Activated CD8-positive, alpha-beta T cell treated with anti-CD3 and anti-CD28 coated beads, Interleukin-2, amount 10 ng/mL, durations not matched to agents 7 days and 5 days (primary cell): ENCODE measurements at regions of chr12 and their contacts with region 1.

Region 1: DNA sequence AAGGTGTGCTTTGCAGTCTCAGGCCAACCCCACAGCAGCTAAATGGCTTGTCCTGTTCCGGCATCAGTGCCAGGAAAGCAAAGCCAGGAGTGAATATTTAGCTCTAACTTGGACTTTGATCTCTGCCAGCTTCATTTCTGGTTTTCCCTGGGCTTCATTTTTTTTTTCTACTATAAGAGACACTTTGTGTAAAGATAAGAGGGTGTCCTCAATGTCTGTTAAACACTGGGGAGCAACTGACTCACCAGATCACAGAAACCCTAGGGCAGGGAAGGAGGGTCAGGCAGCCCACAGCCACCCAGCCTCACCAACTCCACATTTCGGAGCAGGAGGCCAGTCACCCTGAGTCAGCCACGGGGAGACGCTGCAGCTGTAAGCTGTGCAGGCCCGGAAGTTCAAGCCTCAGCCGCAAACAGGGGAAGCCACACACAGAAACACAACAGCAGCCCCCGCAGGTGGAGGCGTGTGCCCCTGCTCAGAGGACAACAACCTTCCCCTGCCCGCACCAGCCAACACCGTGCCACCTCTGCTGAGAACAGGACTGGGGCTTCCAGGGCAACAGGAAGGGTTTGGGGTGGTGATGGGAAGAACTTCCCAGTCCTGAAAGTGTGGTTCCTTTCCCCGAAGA is 6.3 kb downstream of the TNFRSF1A start:
- DNase-seq: peak; percentile 93
- ATAC-seq: peak; percentile 67
- H3K4me3 Mint-ChIP-seq: no peak overlapping the region
- H3K27ac Mint-ChIP-seq: no peak overlapping the region
- H3K4me1 Mint-ChIP-seq: peaks cover 9% of the 10 kb centered on the region
- H3K27me3 Mint-ChIP-seq: no peaks in the 10 kb centered on the region

Region 2: DNA sequence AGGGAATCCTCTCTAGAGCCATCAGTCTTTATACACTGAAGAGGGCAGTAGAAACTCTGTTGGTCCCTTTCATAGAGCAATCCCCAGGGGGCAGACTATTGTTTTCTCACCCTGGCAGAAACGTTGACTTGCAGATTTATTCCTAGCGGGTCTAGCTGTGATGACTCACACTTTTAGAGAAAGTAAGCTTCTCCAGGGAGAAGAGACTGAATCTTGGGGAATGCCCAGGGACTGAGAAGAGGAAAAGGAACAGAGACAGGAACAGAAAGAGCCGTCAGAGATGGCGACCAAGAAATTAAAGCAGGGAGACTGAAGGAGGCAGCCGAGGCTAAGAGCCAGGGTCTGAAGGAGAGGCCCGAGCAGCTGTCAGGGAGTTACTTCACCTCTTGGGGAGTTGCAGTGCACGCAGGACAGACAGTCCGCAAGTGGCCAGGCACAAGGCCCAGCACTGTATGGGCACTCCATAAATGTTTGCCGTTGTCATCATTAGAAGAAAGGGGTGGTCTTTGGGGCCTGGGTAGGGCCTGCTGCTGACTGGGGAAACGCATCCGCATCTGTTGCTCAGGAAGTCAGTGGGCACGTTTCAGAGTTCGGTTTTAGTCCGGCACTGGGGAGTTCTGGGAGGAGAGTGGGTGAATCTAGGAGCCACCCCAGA is 12.1 kb before region 1 on chr12:
- CTCF ChIA-PET with region 1: interaction called, 45 read pairs
- POLR2A ChIA-PET with region 1: interaction called, 7 read pairs
- DNase-seq: peak; percentile 60
- ATAC-seq: peak; percentile 73
- H3K4me3 Mint-ChIP-seq: peak overlapping the region; percentile 45
- H3K27ac Mint-ChIP-seq: peak overlapping the region; percentile 87
- H3K4me1 Mint-ChIP-seq: peaks cover 62% of the 10 kb centered on the region
- H3K27me3 Mint-ChIP-seq: no peaks in the 10 kb centered on the region

Region 3: DNA sequence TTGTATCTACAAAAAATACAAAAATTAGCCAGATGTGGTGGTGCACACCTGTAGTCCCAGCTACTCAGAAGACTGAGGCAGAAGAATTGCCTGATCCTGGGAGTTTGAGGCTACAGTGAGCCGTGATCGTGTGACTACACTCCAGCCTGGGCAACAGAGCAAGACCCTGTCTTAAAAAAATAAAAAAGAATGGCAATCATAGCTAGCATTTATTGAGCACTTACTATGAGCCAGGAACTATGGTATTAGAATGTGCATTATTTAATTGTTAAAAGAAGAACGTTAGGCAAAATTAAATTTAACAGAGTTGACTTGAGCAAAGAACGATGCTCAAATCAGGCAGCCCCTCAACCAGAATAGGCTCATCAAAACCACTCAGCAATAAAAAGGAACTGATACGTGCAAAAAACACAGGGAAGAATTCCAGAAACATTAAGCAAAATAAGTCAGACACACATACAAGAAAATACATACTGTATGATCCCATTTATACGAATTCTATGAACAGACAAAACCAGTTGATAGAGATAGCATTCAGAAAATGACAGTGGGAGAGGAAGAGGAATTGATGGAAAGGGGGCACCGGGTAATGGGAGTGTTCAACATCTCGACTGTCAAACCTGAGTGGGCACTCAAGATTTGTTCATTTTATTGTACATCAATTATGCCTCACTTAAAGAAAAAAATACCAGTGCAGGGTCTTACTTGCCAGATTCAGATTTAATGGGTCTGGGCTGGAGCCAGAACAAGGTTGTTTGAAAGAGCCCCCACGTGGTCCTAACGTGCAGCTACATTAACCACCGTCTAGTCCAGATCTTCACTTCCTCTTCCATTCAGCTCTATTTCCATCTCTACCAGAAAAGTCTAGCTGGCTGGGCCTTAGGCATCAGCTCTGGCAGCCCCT is 31.8 kb after region 1 on chr12:
- CTCF ChIA-PET with region 1: interaction called, 176 read pairs
- POLR2A ChIA-PET with region 1: interaction called, 12 read pairs
- DNase-seq: peak; percentile 66
- ATAC-seq: peak; percentile 62
- H3K4me3 Mint-ChIP-seq: no peak overlapping the region
- H3K27ac Mint-ChIP-seq: peak overlapping the region; percentile 71
- H3K4me1 Mint-ChIP-seq: peaks cover 48% of the 10 kb centered on the region
- H3K27me3 Mint-ChIP-seq: no peaks in the 10 kb centered on the region

Region 4: DNA sequence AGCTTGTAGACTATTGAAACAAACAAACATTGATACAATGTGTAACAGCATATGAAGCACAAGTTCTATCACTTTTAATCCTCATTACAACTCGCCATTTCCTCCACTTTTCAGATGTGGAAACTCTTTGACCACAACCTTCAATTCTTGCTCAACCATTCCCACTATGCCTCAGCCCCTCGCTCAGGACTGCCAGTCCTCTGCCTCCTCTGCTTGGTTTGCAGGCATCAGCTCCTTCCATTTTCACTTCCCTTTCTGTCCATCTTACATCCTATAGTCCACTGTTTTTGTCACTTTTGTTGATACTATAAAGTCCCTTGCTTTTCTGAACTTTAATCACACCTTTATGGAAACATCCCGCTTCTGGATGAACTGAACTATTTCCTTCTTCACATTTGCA is 81.0 kb after region 1 on chr12:
- CTCF ChIA-PET with region 1: interaction called, 46 read pairs
- POLR2A ChIA-PET with region 1: no interaction called
- DNase-seq: no peak
- ATAC-seq: no peak
- H3K4me3 Mint-ChIP-seq: no peak overlapping the region
- H3K27ac Mint-ChIP-seq: no peak overlapping the region
- H3K4me1 Mint-ChIP-seq: peaks cover 21% of the 10 kb centered on the region
- H3K27me3 Mint-ChIP-seq: peaks cover 2% of the 10 kb centered on the region

Region 5: GRCh38 chr12:6443361-6443983 is 107.9 kb after region 1 on chr12:
- CTCF ChIA-PET with region 1: interaction called, 10 read pairs
- POLR2A ChIA-PET with region 1: interaction called, 3 read pairs
- DNase-seq: peak; percentile 49
- ATAC-seq: peak; percentile 29
- H3K4me3 Mint-ChIP-seq: peak overlapping the region; percentile 90
- H3K27ac Mint-ChIP-seq: peak overlapping the region; percentile 96
- H3K4me1 Mint-ChIP-seq: peaks cover 68% of the 10 kb centered on the region
- H3K27me3 Mint-ChIP-seq: no peaks in the 10 kb centered on the region

Region 6: DNA sequence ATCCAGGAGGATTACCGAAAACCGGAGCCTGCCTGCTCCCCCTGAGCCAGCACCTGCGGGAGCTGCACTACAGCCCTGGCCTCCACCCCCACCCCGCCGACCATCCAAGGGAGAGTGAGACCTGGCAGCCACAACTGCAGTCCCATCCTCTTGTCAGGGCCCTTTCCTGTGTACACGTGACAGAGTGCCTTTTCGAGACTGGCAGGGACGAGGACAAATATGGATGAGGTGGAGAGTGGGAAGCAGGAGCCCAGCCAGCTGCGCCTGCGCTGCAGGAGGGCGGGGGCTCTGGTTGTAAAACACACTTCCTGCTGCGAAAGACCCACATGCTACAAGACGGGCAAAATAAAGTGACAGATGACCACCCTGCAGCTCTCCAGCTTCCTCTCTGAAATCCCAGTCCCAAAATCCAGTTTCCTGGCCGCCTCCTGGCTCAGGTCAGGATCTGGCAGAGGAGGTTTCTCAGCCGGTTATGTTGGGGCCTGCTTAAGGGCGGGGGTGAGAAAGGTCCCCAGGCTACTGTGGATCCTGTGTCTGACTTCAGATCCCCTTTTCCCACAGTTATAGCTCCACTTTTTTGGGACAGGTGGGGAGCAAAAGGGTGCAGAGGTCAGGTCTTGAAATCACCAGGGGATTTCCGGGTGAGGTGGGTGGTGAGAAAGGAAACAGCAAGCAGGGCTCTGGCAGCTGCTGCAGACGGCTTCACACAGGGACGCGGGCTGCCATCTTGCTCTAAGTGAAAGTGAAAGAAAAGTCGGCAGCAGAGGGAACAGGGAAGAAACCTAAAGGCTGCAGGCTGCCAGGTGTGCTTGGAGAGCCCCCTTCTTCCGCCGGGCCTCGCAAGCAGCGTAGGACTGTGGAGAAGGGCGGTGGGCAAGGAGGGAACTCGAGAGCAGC is 116.0 kb after region 1 on chr12 and contains the start of gene TAPBPL:
- CTCF ChIA-PET with region 1: interaction called, 10 read pairs
- POLR2A ChIA-PET with region 1: interaction called, 6 read pairs
- DNase-seq: peak; percentile 88
- ATAC-seq: peak; percentile 85
- H3K4me3 Mint-ChIP-seq: peak within 1 kb of the TSS; percentile 99
- H3K27ac Mint-ChIP-seq: peak within 1 kb of the TSS; percentile 99
- H3K4me1 Mint-ChIP-seq: peaks cover 78% of the 10 kb centered on the region
- H3K27me3 Mint-ChIP-seq: no peaks in the 10 kb centered on the region
- total RNA-seq, gene TAPBPL: 31.2 to 32.5 TPM

Region 7: DNA sequence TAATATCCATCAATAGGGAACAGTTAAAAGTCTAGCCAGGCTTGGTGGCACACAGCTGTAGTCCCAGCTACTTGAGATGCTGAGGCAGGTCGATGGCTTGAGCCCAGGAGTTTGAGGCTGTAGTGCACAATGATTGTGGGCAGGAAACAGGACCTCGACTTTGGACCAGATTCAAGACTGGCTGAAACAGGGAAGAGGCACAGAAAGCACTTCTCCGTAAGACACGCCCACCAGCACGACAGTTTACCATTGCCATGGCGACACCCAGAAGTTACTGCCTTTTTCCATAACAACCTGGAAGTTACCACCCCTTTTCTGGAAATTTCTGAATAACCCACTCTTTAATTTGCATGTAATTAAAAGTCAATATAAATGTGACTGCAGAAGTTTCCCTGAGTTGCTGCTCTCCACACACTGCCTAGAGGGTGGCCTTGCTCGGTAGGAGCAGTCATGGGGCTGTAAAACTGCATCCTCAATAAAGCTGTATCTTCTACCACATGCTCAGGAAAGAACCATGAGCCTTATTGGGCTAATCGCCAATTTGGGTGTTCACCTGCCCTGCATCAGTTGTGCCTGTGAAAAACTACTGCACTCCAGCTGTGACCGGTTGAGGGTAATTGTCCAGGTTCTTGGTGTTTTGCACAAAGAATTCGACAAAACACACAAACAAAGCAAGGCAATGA is 564.4 kb after region 1 on chr12:
- CTCF ChIA-PET with region 1: no interaction called
- POLR2A ChIA-PET with region 1: no interaction called
- DNase-seq: no peak
- ATAC-seq: no peak
- H3K4me3 Mint-ChIP-seq: no peak overlapping the region
- H3K27ac Mint-ChIP-seq: no peak overlapping the region
- H3K4me1 Mint-ChIP-seq: peaks cover 14% of the 10 kb centered on the region
- H3K27me3 Mint-ChIP-seq: no peaks in the 10 kb centered on the region